ENCODE measurements at regions of chrX and their contacts with region 1.

Region 1: DNA sequence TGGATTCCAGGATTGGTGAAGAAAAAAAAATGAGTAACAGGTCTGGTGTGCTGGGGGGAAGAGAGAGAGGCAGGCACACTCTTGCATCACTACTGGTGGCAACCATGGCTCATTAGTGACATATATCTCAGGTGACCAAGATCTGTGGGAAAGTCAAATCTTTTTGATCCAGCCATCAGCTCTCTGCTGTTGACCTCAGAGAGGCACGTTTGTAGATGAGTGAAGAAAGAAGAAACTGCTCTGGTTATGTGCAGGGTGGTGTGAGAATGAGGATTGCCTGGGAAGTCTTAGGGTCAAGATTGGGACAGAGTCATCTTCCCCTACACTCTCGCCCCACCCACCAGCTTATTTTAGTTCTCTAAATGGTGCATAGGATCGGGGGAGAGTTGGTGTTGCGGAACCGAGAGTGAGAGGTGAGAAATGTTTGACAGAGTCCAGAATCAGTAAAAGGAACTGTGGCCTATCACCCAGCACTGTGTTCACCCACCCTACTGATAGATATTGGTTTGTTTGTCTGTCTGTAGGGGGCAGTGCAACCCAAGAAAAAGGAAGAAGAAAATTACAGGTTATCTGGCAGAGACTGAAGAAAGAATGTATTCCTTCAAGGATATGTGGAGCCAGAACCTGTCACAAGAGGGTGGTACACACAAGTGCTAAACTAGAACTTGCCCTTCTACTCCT is 21.9 kb downstream of the ARMCX6 start:
- DNase-seq: peak; percentile 75
- H3K4me3 ChIP-seq: no peak overlapping the region
- H3K27ac ChIP-seq: no peak overlapping the region
- H3K4me1 ChIP-seq: no peaks in the 10 kb centered on the region
- H3K27me3 ChIP-seq: peaks cover 4 to 5% of the 10 kb centered on the region in 2 experiments
- CTCF ChIP-seq: peak; percentile 45 to 53
- POLR2A ChIP-seq: no peak

Region 2: DNA sequence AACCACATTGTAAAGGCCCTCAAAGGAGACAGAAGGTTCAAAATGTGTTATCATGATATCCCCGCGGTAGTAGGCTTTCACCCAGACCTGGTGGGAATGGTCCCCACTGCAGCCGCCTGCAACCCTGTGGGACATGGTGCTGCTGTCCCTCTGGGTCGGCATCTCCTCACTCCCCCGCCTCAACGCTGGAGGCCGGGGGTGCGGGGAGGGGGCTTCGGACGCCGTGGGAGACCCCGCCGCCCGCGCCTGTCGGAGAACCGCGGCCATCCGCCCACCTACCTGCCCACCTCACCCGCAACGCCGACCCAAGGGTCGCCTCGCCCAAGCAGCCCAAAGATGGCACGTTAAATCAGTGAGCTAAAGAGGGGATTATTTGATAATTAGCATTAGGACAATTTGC is 56.8 kb before region 1 on chrX:
- CTCF ChIA-PET with region 1: no interaction called
- POLR2A ChIA-PET with region 1: no interaction called
- dilution Hi-C with region 1: no loop called
- intact Hi-C with region 1: no loop called
- DNase-seq: no peak
- H3K4me3 ChIP-seq: no peak overlapping the region
- H3K27ac ChIP-seq: no peak overlapping the region
- H3K4me1 ChIP-seq: no peaks in the 10 kb centered on the region
- H3K27me3 ChIP-seq: no peaks in the 10 kb centered on the region
- CTCF ChIP-seq: no peak
- POLR2A ChIP-seq: no peak

Region 3: GRCh38 chrX:101759000-101759399 is 163.1 kb after region 1 on chrX:
- CTCF ChIA-PET with region 1: interaction called, 6 read pairs
- POLR2A ChIA-PET with region 1: no interaction called
- dilution Hi-C with region 1: no loop called
- intact Hi-C with region 1: loop called (anchors 5 kb)
- DNase-seq: peak; percentile 69
- H3K4me3 ChIP-seq: no peak overlapping the region
- H3K27ac ChIP-seq: no peak overlapping the region
- H3K4me1 ChIP-seq: no peaks in the 10 kb centered on the region
- H3K27me3 ChIP-seq: no peaks in the 10 kb centered on the region
- CTCF ChIP-seq: peak; percentile 22 to 30
- POLR2A ChIP-seq: no peak

Region 4: DNA sequence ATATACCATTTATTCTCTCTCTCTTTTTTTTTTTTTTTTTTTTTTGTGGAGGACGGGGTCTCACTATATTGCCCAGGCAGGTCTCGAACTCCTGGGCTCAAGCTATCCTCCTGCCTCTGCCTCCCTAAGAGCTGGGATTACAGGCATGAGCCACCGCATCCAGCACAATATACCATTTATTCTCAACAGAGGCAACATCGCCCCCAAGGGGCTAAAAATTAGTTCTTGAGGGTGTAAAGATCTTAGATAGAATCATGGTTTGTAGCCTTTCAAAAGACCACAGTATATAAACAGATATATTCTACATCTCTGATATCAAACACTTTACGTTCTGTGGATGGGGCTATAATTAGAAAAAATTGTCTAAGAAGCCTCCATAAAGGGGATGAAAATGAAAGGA is 489.8 kb after region 1 on chrX:
- CTCF ChIA-PET with region 1: no interaction called
- POLR2A ChIA-PET with region 1: no interaction called
- dilution Hi-C with region 1: no loop called
- intact Hi-C with region 1: loop called (anchors 5 kb)
- DNase-seq: peak; percentile 1
- H3K4me3 ChIP-seq: no peak overlapping the region
- H3K27ac ChIP-seq: no peak overlapping the region
- H3K4me1 ChIP-seq: no peaks in the 10 kb centered on the region
- H3K27me3 ChIP-seq: no peaks in the 10 kb centered on the region
- CTCF ChIP-seq: no peak
- POLR2A ChIP-seq: no peak